ENCODE measurements at regions of chr5 and their contacts with region 1.

Region 1: GRCh38 chr5:116068028-116068632 is 16.7 kb upstream of the COMMD10 start:
- DNase-seq: peak; percentile 44
- H3K4me3 ChIP-seq: no peak overlapping the region
- H3K27ac ChIP-seq: no peak overlapping the region
- H3K4me1 ChIP-seq: no peaks in the 10 kb centered on the region
- H3K27me3 ChIP-seq: no peaks in the 10 kb centered on the region
- CTCF ChIP-seq: peak; percentile 87

Region 2: GRCh38 chr5:115634343-115635132 is 433.6 kb before region 1 on chr5:
- intact Hi-C with region 1: loop called (anchors 2 kb)
- DNase-seq: peak; percentile 93
- H3K4me3 ChIP-seq: peak overlapping the region; percentile 19
- H3K27ac ChIP-seq: peak overlapping the region; percentile 56
- H3K4me1 ChIP-seq: no peaks in the 10 kb centered on the region
- H3K27me3 ChIP-seq: no peaks in the 10 kb centered on the region
- CTCF ChIP-seq: peak; percentile 93

Region 3: DNA sequence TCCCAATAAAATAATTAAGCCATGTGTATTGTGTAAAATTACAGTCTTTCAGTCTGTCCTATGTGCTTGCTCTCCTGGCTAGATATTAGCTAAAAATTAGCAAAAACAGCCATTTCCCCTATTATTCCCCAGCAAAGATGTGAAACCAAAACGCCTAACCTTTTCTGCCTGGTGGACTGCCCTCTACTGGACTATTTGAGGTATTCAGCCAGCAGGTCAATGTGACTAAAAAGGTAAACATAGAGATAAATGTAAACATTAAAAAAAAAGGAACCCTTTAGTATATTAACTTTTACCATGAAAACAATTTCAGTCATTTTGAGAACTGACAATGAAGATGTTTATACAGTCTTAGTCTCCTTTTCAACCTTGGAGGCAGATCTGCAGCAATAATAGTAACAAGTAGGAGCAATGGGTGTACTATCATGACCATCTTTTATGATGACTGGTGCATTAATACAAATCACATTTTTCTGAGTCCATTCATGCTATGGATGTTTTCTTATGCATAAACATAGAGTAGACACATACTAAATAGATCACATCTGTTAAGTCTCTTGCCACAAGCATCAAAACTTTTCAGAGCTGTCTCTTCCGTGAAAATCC is 236.9 kb before region 1 on chr5:
- intact Hi-C with region 1: loop called (anchors 10 kb)
- DNase-seq: no peak
- H3K4me3 ChIP-seq: no peak overlapping the region
- H3K27ac ChIP-seq: no peak overlapping the region
- H3K4me1 ChIP-seq: no peaks in the 10 kb centered on the region
- H3K27me3 ChIP-seq: no peaks in the 10 kb centered on the region
- CTCF ChIP-seq: peak; percentile 66

Region 4: GRCh38 chr5:116144103-116144502 is 76.0 kb after region 1 on chr5:
- intact Hi-C with region 1: no loop called
- DNase-seq: no peak
- H3K4me3 ChIP-seq: no peak overlapping the region
- H3K27ac ChIP-seq: no peak overlapping the region
- H3K4me1 ChIP-seq: no peaks in the 10 kb centered on the region
- H3K27me3 ChIP-seq: no peaks in the 10 kb centered on the region
- CTCF ChIP-seq: no peak

Measured in colonic mucosa (tissue), 4 donors.